Activated CD4-positive, alpha-beta memory T cell treated with anti-CD3 and anti-CD28 coated beads, Interleukin-2, amount 10 ng/mL, durations not matched to agents 7 days and 5 days (primary cell): ENCODE measurements at regions of chr10 and their contacts with region 1.

Region 1: GRCh38 chr10:68955832-68956532 is at the start of gene DDX21:
- DNase-seq: peak; percentile 91
- H3K4me3 Mint-ChIP-seq: peak within 1 kb of the TSS; percentile 94
- H3K27ac Mint-ChIP-seq: peak within 1 kb of the TSS; percentile 98
- H3K4me1 Mint-ChIP-seq: peaks cover 36% of the 10 kb centered on the region
- H3K27me3 Mint-ChIP-seq: no peaks in the 10 kb centered on the region
- total RNA-seq, gene DDX21: 82.3 to 82.7 TPM

Region 2: DNA sequence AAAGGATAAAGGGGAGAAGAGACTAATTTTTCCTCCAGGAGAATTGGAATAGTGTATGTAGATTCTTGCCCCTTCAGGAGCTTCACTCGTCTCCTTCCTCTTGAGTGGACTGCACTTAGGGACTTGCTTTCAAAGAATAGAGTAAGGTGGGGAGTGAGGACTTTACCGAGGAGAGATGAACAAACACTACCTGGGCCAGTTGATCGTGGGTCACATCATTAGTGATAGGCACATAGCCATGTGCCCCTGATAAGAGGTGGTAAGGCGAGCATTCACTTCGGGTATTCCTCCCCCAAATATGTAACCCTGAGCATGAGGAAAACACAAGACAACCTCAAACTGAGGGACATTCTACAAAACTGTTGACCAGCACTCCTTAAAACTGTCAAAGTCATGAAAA is 18.0 kb after region 1 on chr10:
- CTCF ChIA-PET with region 1: interaction called, 17 read pairs
- POLR2A ChIA-PET with region 1: interaction called, 86 read pairs
- DNase-seq: no peak
- H3K4me3 Mint-ChIP-seq: no peak overlapping the region
- H3K27ac Mint-ChIP-seq: peak overlapping the region; percentile 12
- H3K4me1 Mint-ChIP-seq: peaks cover 28% of the 10 kb centered on the region
- H3K27me3 Mint-ChIP-seq: no peaks in the 10 kb centered on the region

Region 3: GRCh38 chr10:68988530-68989316 is 32.7 kb after region 1 on chr10 and contains the start of gene KIFBP:
- CTCF ChIA-PET with region 1: interaction called, 14 read pairs
- POLR2A ChIA-PET with region 1: interaction called, 18 read pairs
- DNase-seq: peak; percentile 89
- H3K4me3 Mint-ChIP-seq: peak within 1 kb of the TSS; percentile 97
- H3K27ac Mint-ChIP-seq: peak within 1 kb of the TSS; percentile 89
- H3K4me1 Mint-ChIP-seq: peaks cover 58% of the 10 kb centered on the region
- H3K27me3 Mint-ChIP-seq: no peaks in the 10 kb centered on the region
- total RNA-seq, gene KIFBP: 16.4 to 18.3 TPM

Region 4: DNA sequence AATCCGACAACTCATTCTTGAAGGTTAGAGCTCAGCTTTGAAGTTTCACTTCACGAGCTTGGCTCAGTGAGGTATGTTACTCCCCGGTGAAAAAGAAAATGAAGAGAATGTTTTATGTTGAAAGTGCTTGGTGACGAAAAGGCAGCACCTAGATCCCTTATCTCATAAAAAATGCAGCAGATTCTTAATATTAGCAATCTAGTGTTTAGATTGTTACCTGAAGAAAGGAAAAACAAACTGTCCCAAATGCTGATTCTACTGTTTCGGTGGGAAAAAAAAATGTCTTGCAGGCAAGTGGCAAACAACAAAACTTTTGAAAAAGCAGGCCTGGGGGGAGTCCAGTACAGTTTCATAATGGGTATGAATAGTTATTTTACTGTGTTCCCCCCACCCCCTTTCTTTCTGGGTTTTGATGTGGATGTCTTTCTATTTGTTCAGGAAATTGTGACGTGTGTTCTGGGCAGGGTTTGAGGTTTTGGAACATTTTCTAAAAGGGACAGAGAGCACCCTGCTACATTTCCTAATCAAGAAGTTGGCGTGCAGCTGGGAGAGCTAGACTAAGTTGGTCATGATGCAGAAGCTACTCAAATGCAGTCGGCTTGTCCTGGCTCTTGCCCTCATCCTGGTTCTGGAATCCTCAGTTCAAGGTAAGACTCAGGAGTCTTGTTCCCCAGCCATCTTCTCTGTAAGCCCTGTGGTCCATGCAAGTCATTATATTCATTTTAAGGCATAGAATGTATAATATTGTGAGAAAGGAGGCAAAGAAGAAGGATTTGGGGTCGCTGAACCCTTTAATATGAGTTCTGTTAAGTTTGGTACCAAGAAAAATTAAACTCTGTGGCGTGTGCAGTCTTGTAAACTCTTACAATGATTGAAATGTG is 131.8 kb after region 1 on chr10 and contains the start of gene SRGN:
- CTCF ChIA-PET with region 1: interaction called, 27 read pairs
- POLR2A ChIA-PET with region 1: interaction called, 22 read pairs
- DNase-seq: peak; percentile 85
- H3K4me3 Mint-ChIP-seq: peak within 1 kb of the TSS; percentile 89
- H3K27ac Mint-ChIP-seq: peak within 1 kb of the TSS; percentile 95
- H3K4me1 Mint-ChIP-seq: peaks cover 51% of the 10 kb centered on the region
- H3K27me3 Mint-ChIP-seq: no peaks in the 10 kb centered on the region
- total RNA-seq, gene SRGN: 468 to 474 TPM

Region 5: DNA sequence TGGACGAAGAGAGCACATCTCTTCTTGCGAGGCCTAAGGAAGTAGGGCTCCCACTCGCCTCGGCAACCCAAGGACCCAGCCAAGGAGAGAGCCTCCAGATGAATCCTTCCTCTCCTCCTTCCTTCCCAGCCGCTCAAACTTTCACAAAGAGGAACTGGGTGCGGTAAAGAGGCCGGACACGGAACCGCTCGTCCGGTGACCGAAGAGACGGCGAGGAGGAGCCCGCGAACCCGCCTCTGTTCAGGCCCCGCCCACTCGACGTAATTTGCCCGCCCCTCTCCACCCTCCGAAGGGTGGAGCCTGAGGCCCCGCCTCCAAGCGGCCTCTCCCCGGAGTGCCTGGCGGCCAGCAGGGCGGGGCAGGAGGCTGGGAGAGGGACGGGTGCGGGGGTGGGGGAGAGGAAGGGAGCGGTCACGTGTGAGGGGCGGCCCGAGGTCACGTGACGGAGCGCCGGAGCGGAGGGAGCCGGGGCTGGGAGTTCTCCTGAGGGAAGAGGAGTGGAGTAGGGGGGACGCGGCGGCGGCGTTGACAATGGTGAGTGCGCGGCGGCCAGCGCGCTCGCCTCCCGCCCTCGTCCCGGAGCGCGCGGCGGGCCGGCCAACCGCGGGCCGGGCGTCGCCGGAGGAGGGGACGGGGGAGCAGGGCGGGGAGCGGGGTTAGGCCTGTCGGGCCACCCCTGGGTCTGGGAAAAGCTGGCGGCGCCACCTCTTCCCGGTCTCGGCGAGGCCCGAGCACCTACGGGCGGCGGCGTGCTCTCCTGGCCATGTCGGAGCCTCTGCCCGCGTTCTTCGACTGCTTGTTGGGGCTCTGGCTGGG is 168.0 kb after region 1 on chr10 and contains the start of gene VPS26A:
- CTCF ChIA-PET with region 1: interaction called, 5 read pairs
- POLR2A ChIA-PET with region 1: interaction called, 11 read pairs
- DNase-seq: peak; percentile 99
- H3K4me3 Mint-ChIP-seq: peak within 1 kb of the TSS; percentile 92
- H3K27ac Mint-ChIP-seq: peak within 1 kb of the TSS; percentile 88
- H3K4me1 Mint-ChIP-seq: peaks cover 37% of the 10 kb centered on the region
- H3K27me3 Mint-ChIP-seq: peaks cover 3% of the 10 kb centered on the region
- total RNA-seq, gene VPS26A: 57.1 to 63.4 TPM